ENCODE measurements at regions of chr21 and their contacts with region 1.

Region 1: GRCh38 chr21:35150562-35151226 is 101.6 kb upstream of the RUNX1 start:
- DNase-seq: no peak
- H3K4me3 Mint-ChIP-seq: no peak overlapping the region
- H3K27ac Mint-ChIP-seq: peak overlapping the region; percentile 91
- H3K4me1 Mint-ChIP-seq: peaks cover 52% of the 10 kb centered on the region
- H3K27me3 Mint-ChIP-seq: no peaks in the 10 kb centered on the region

Region 2: DNA sequence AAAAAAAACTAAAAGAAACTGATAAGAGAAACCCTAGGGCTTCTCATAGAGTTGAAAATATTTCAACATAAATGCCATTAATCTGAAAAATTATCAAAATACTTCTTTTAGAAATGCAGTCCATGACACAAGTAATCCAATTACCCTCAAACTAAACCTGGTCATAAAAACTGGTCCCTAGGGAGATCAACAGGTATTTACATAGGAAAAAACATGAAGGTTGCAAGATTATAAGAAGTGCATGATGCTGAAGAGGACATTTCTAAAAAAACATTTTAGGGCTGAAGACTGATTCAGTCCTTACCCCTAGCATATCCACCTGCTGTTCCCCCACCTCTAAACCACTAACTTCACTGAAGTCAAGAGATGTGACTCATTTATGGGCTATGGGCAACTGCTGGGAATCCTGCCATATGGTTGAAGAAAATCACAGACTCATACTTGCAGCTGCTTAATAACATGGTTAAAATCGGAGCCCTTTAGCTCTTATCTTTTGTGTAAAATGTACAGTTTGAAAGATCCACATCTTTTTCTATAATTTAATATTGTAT is 29.4 kb after region 1 on chr21:
- CTCF ChIA-PET with region 1: no interaction called
- intact Hi-C with region 1: loop called (anchors 2 kb)
- DNase-seq: peak; percentile 47
- H3K4me3 Mint-ChIP-seq: no peak overlapping the region
- H3K27ac Mint-ChIP-seq: no peak overlapping the region
- H3K4me1 Mint-ChIP-seq: peaks cover 20% of the 10 kb centered on the region
- H3K27me3 Mint-ChIP-seq: no peaks in the 10 kb centered on the region